ENCODE measurements at regions of chr6 and their contacts with region 1.

Region 1: GRCh38 chr6:168117942-168118341 is 38.9 kb upstream of the FRMD1 start:
- DNase-seq: no peak

Region 2: GRCh38 chr6:167907837-167908681 is 209.9 kb before region 1 on chr6:
- intact Hi-C with region 1: loop called (anchors 5 kb)
- DNase-seq: no peak

Region 3: DNA sequence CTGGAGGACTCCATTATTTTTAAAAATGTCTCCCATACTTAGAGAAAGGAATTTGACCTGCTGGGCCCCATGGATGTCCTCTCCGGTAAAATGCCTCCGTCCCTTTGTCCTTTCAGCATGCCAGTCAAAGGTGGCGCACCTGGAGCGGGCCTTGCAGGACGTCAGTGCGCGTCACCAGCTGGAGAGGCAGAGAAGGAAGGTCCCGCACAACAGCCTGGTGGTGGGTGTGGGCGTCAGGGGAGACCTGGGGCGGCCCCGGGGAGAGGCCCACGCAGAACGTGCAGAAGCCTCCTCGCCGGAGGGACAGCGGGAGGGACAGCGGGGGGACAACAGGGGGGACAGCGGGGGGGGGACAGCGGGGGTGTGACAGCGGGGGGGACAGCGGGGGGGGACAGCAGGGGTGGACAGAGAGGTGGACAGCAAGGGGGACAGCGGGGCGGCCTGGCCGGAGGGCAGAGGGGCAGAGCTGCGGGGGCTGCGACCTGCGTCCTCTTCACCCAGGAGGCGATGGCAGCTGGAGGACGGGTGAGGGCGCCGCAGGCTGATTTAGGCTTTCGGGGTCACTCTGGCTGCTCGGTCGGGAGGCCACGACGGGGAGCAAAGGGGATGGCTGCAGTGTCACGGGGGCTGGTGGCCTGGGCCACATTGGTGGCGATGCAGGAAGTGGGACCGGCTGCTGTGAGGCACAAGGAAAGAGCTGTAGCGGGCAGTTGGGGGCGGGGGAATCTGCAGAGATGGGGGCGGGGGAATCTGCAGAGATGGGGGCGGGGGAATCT is 121.3 kb before region 1 on chr6:
- intact Hi-C with region 1: loop called (anchors 10 kb)
- DNase-seq: no peak

Region 4: DNA sequence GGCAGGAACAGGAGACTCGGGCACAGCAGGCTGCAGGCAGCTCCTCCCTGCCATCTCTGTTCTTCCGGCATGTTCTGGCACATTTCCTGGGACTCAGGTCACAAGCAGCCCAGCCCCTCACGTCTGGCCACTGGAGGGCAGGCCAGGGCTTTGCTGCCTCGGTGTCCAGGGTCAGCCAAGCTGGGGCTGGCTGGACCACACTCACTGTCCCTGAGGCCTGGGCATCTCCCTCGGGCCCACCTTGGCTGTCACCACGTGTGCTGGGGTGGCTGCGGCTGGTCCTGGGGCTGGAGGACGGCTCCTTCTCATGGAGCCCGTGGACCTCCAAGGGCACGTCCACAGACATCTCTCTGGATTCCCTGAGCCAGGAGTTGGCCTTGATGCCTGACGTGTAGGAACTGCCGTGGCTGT is 57.4 kb before region 1 on chr6:
- intact Hi-C with region 1: loop called (anchors 5 kb)
- DNase-seq: peak; percentile 88

Region 5: GRCh38 chr6:168201383-168201782 is 83.4 kb after region 1 on chr6:
- intact Hi-C with region 1: no loop called
- DNase-seq: no peak

Measured in cardiac septum (tissue), 1 donor.